HAP-1 (cell line): ENCODE measurements at regions of chr9 and their contacts with region 1.

Region 1: DNA sequence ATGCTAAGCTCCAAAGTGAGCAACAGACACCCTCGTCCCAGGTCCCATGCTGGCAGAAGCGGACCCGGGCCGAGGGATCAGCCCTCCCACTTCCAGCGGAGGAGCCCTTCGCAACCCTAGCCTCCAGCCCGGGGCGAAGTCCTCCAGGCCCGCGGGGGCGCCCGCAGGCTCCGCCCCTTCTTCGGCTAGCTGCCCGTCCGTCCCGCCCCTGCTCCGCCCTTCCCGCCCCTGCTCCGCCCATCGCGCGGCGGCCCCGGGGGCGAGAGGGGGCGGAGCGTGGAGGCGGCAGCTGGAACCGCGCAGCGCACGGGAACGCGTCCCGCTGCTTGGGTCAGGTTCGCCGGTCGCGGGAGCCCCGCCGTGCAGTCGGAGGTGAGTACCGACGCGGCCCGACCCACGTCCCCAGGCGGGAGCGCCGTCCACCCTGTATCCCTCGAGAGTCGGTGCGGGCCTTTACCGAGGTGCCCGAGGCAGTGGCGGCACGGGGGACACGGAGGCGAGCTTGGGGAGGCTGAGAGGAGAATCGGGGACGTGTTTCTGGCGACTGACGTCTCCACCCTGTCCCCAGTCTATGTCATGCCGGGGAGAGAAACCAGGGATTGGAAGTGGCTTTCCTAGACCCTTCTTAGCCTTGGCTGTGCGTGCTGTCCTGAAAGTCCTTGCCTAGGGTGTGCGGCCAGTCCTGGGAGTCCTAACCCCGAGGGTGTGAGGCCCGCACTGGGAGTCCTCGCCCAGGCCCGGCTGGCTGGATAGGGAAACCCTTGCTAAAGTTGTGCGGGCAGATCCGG is at the start of gene ACO1:
- DNase-seq: peak; percentile 78 to 94
- H3K4me3 ChIP-seq: peak within 1 kb of the TSS; percentile 91
- H3K4me1 ChIP-seq: peaks cover 13% of the 10 kb centered on the region
- H3K27me3 ChIP-seq: peaks cover 17% of the 10 kb centered on the region

Region 2: GRCh38 chr9:32264170-32264862 is 120.2 kb before region 1 on chr9:
- in situ Hi-C with region 1: no loop called
- DNase-seq: peak in 1 of 2 experiments; percentile 48
- H3K4me3 ChIP-seq: no peak overlapping the region
- H3K4me1 ChIP-seq: peaks cover 16% of the 10 kb centered on the region
- H3K27me3 ChIP-seq: no peaks in the 10 kb centered on the region

Region 3: GRCh38 chr9:32571969-32572899 is 187.7 kb after region 1 on chr9:
- in situ Hi-C with region 1: loop called (anchors 5 kb)
- DNase-seq: peak; percentile 62 to 79
- H3K4me3 ChIP-seq: peak overlapping the region; percentile 84
- H3K4me1 ChIP-seq: peaks cover 13% of the 10 kb centered on the region
- H3K27me3 ChIP-seq: no peaks in the 10 kb centered on the region

Region 4: DNA sequence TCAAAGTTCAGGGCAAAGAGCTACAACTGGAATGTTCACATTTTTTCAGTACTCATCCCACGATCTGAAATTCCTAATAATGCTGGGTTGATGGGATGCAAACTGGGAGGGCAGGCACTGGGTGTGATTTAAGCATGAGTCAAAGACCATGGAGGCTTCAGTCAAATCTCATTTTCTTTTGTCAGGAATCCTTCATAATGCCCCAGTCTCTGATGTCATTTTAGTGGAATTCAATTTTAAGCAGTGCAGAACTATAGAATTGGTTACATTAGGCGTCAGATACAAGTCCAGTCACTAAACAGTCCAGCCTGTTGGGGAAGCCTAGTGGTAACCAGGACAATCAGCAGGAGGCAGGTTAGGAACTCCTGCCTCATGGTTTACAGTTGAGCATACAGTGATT is 357.7 kb after region 1 on chr9:
- in situ Hi-C with region 1: no loop called
- DNase-seq: no peak
- H3K4me3 ChIP-seq: no peak overlapping the region
- H3K4me1 ChIP-seq: no peaks in the 10 kb centered on the region
- H3K27me3 ChIP-seq: peaks cover 9% of the 10 kb centered on the region; the same call in 1 of the 2 replicates